Dendritic cell treated with granulocyte-macrophage colony-stimulating factor and Interleukin-4, amounts not matched to agents 40 ng/mL and 50 ng/mL, for 4 days (primary cell): ENCODE measurements at regions of chr5 and their contacts with region 1.

Region 1: DNA sequence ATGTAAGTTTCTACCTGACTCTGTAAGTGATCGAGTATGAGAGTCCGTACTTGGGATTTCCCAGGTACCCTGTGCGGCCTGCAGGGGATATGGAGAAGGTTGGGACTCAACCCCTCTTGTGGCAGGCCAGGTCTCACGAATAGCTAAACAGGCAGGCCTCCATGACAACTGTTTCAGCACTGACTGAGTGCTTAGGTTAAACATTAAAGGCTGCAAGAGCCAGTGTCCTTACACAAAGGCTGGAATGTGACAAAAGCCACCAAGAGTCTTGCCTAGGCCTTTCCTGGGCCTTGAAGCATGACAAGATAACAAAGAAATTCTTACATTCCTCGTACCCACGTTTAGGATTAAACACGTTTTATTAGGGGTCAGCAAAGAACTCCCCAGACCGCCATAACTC is 58.6 kb downstream of the THBS4 start:
- H3K4me3 Mint-ChIP-seq: no peak overlapping the region
- H3K27ac Mint-ChIP-seq: no peak overlapping the region
- H3K4me1 Mint-ChIP-seq: peaks cover 20% of the 10 kb centered on the region
- H3K27me3 Mint-ChIP-seq: no peaks in the 10 kb centered on the region

Region 2: GRCh38 chr5:80149161-80149609 is 55.4 kb after region 1 on chr5:
- intact Hi-C with region 1: loop called (anchors 5 kb)
- H3K4me3 Mint-ChIP-seq: no peak overlapping the region
- H3K27ac Mint-ChIP-seq: no peak overlapping the region
- H3K4me1 Mint-ChIP-seq: peaks cover 37% of the 10 kb centered on the region
- H3K27me3 Mint-ChIP-seq: no peaks in the 10 kb centered on the region

Region 3: GRCh38 chr5:80308526-80308925 is 214.7 kb after region 1 on chr5:
- intact Hi-C with region 1: loop called (anchors 1 kb)
- H3K4me3 Mint-ChIP-seq: no peak overlapping the region
- H3K27ac Mint-ChIP-seq: no peak overlapping the region
- H3K4me1 Mint-ChIP-seq: no peaks in the 10 kb centered on the region
- H3K27me3 Mint-ChIP-seq: no peaks in the 10 kb centered on the region